ENCODE measurements at regions of chr14 and their contacts with region 1.

Region 1: GRCh38 chr14:24389201-24389848 is 9.5 kb upstream of the NYNRIN start:
- DNase-seq: no peak
- H3K4me3 ChIP-seq: no peak overlapping the region
- CTCF ChIP-seq: no peak

Region 2: GRCh38 chr14:24259252-24259995 is 129.9 kb before region 1 on chr14:
- CTCF ChIA-PET with region 1: no interaction called
- POLR2A ChIA-PET with region 1: no interaction called
- DNase-seq: no peak
- H3K4me3 ChIP-seq: no peak overlapping the region
- CTCF ChIP-seq: no peak

Region 3: DNA sequence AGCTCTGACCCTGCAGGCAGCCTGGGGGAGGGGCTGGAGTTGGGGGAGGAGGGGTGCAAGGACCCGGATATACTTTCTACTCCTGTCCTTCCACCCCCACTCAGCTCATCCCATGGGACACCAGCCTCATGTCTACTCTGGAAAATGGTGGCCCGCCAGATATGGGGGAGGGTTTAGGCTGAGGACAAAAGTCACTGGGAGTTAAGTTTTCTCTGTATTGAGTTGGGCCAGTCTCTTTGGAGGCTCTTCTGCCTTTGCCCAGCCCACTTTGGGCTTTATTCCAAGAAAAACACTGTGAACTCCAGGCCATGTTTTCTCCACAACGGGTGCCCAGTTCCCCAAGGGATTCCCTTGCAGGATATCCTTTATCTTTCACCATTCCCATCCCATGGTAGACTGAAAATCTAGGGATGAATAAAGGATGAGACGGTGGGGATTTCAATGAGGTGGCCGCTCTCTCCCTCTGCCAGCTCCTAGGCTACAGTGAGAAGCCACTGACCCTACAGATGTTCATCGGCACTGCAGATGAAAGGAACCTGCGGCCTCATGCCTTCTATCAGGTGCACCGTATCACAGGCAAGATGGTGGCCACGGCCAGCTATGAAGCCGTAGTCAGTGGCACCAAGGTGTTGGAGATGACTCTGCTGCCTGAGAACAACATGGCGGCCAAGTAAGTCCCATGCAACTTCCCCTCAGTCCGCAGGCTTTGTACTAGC is 16.5 kb before region 1 on chr14:
- CTCF ChIA-PET with region 1: interaction called, 15 read pairs
- POLR2A ChIA-PET with region 1: no interaction called
- DNase-seq: no peak
- H3K4me3 ChIP-seq: no peak overlapping the region
- CTCF ChIP-seq: no peak

Measured in AG04449 (cell line).